Activated B cell treated with CpG ODN at 0.5 μM for 24 hours (primary cell): ENCODE measurements at regions of chr2 and their contacts with region 1.

Region 1: DNA sequence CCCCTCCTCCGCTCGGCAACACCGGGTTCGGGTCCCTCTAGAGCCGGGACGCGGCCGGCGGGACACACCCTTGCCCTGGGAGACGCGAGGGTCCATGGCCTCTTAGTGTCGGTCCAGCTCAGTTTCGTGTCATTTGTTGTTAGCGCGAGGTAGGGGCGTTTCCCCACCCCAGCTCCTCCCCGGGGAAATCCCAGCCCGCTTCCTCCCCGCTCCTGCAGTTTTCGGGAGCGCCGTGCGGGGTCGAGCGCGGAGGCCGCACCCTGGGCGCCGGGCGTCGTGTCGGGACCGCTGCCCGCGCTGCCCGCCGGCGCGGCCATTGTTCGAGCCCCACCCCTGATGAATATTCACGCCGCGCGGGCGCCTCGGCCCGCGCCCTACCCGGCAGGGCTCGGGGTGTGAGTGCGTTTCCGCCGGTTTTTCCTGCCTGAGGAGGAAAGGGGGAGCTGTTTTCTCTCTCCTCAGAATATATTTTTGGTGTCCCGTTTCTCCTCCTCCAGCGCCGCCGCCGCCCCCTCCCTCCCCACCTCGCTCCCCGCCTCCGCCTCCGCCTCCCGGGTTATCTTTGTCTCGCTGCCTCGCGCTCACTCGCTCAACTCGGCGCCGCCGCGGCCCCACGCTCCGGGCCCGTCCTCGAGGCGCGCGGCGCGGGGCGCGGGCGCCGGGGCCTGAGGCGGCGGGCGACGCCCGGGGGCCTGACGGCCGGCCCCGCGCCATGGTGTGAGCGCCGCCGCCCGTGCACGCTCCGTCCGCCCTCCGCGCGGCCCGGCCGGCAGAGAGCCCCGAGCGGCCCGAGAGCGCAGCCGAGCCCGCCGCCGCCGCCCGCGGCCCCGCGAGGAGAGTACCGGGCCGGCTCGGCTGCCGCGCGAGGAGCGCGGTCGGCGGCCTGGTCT is at the start of gene MAP4K4:
- DNase-seq: peak; percentile 71
- ATAC-seq: peak; percentile 71
- H3K4me3 Mint-ChIP-seq: peak within 1 kb of the TSS; percentile 92
- H3K27ac Mint-ChIP-seq: peak within 1 kb of the TSS; percentile 91
- H3K4me1 Mint-ChIP-seq: peaks cover 8% of the 10 kb centered on the region
- H3K27me3 Mint-ChIP-seq: no peaks in the 10 kb centered on the region
- CTCF ChIP-seq: no peak
- total RNA-seq, gene MAP4K4: 211 and 232 TPM in 2 replicates

Region 2: GRCh38 chr2:101400048-101400447 is 297.3 kb before region 1 on chr2:
- CTCF ChIA-PET with region 1: no interaction called
- POLR2A ChIA-PET with region 1: no interaction called
- intact Hi-C with region 1: loop called (anchors 5 kb)
- DNase-seq: no peak
- ATAC-seq: peak; percentile 30
- H3K4me3 Mint-ChIP-seq: peak overlapping the region; percentile 56
- H3K27ac Mint-ChIP-seq: peak overlapping the region; percentile 84
- H3K4me1 Mint-ChIP-seq: peaks cover 58% of the 10 kb centered on the region
- H3K27me3 Mint-ChIP-seq: peaks cover 5% of the 10 kb centered on the region
- CTCF ChIP-seq: no peak

Region 3: DNA sequence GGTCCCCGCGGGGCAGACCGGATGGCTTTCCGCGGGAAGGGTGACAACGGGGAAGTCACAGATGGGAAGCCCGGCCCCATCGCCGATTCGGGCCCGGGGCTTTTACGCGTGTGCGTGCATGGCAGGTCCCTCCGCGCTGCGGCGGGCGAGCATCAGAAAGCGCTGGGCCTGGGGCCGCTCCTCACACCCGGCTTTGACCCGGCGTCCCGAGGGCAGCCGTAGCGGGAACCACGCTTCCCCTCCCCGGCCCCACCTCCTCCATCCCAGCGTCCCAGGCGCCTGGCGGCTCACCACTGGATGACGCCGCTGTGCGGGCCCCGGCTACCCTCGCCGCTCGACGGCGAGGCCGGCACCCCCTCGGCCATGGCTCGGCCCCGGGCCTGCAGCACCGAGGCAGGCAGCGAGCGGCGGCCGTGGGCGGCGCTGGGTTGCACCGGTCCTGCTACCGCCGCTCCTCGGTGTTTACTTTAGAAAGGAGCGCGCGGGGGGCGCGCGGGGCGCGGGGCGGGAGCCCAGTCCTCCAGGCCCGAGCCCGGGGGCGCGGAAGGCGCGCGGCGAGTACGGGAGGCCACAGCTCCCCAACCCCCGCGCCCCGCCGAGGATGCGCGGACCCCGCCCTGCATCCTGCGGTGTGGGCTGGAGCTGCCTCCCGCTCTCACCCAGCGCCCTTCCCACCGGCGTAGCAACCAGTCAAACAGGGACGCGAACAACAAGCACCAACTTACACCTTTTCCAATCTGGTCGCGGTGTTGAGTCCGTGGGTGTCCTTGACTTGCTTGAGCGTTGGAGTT is 223.3 kb before region 1 on chr2:
- CTCF ChIA-PET with region 1: no interaction called
- POLR2A ChIA-PET with region 1: interaction called, 4 read pairs
- intact Hi-C with region 1: loop called (anchors 5 kb)
- DNase-seq: peak; percentile 37
- ATAC-seq: peak; percentile 65
- H3K4me3 Mint-ChIP-seq: peak overlapping the region; percentile 77
- H3K27ac Mint-ChIP-seq: no peak overlapping the region
- H3K4me1 Mint-ChIP-seq: peaks cover 8% of the 10 kb centered on the region
- H3K27me3 Mint-ChIP-seq: peaks cover 30% of the 10 kb centered on the region
- CTCF ChIP-seq: no peak

Region 4: DNA sequence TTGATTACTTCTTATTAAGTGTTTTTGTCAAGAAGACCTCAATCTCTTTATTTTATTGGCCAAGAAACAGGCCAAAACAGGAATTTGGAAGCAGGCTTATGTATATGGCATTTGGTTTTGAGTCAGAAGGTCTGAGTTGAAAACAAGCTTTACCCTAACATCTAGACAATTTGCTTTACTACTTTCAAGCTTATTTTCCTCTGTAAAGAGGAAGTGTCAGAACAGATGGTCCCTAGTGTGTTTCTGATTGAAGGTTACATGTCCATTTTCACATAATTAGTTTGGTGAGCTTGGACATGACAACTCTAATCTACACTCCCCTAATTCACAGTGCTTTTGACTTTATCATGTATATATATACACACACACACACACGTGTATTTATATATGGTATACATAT is 19.7 kb before region 1 on chr2:
- CTCF ChIA-PET with region 1: no interaction called
- POLR2A ChIA-PET with region 1: interaction called, 17 read pairs
- intact Hi-C with region 1: loop called (anchors 1 kb)
- DNase-seq: no peak
- ATAC-seq: peak; percentile 70
- H3K4me3 Mint-ChIP-seq: no peak overlapping the region
- H3K27ac Mint-ChIP-seq: peak overlapping the region; percentile 24
- H3K4me1 Mint-ChIP-seq: peaks cover 32% of the 10 kb centered on the region
- H3K27me3 Mint-ChIP-seq: no peaks in the 10 kb centered on the region
- CTCF ChIP-seq: no peak

Region 5: DNA sequence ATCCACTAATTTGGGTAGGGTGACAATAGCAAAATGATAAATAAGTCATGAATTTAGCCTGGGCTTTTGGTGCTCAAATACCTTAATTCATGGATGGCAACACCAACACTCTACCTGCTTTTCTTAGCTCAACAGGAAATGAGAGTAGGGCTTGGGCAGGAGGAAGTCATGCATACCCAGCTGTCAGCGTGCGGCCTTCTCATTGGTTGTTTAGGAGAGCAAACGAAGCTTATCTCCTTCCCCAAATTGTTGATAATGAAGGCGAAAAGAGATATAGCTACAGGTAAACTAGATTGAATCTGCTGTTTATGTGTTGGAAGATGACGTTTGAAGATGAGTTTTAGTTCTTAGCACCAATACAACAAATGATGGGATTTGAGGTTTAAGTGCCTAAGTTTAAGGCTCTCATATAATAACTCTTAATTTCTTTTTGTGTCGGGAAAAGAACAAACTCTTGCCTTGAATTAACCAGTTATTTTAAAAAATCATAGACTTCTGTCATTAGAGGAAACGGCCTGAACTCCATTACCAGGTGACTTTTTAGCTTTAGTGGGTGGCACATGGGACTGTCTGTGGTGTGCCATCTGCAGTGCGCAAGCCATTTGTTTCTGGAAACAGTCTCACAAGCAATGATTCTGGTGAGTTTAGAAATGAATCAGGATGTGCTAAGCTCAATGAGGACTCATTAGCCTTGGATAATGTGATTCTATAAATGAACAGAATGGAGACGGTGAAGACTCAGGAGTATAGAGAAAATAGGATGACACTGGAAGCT is 19.9 kb after region 1 on chr2:
- CTCF ChIA-PET with region 1: interaction called, 7 read pairs
- POLR2A ChIA-PET with region 1: interaction called, 87 read pairs
- intact Hi-C with region 1: loop called (anchors 1 kb)
- DNase-seq: no peak
- ATAC-seq: peak; percentile 82
- H3K4me3 Mint-ChIP-seq: peak overlapping the region; percentile 72
- H3K27ac Mint-ChIP-seq: peak overlapping the region; percentile 94
- H3K4me1 Mint-ChIP-seq: peaks cover 97% of the 10 kb centered on the region
- H3K27me3 Mint-ChIP-seq: no peaks in the 10 kb centered on the region
- CTCF ChIP-seq: no peak

Region 6: GRCh38 chr2:101823347-101823791 is 126.0 kb after region 1 on chr2:
- CTCF ChIA-PET with region 1: interaction called, 8 read pairs
- POLR2A ChIA-PET with region 1: no interaction called
- intact Hi-C with region 1: loop called (anchors 2 kb)
- DNase-seq: no peak
- ATAC-seq: peak; percentile 86
- H3K4me3 Mint-ChIP-seq: no peak overlapping the region
- H3K27ac Mint-ChIP-seq: peak overlapping the region; percentile 57
- H3K4me1 Mint-ChIP-seq: peaks cover 68% of the 10 kb centered on the region
- H3K27me3 Mint-ChIP-seq: no peaks in the 10 kb centered on the region
- CTCF ChIP-seq: no peak

Region 7: GRCh38 chr2:102033031-102033749 is 335.8 kb after region 1 on chr2:
- CTCF ChIA-PET with region 1: no interaction called
- POLR2A ChIA-PET with region 1: no interaction called
- intact Hi-C with region 1: no loop called
- DNase-seq: peak; percentile 19
- ATAC-seq: peak; percentile 61
- H3K4me3 Mint-ChIP-seq: peak overlapping the region; percentile 21
- H3K27ac Mint-ChIP-seq: peak overlapping the region; percentile 30
- H3K4me1 Mint-ChIP-seq: peaks cover 20% of the 10 kb centered on the region
- H3K27me3 Mint-ChIP-seq: peaks cover 2% of the 10 kb centered on the region
- CTCF ChIP-seq: no peak